HepG2 (cell line): ENCODE measurements at regions of chr7 and their contacts with region 1.

Region 1: GRCh38 chr7:158353606-158354570 is 233.7 kb downstream of the PTPRN2 start:
- DNase-seq: peak; percentile 22
- ATAC-seq: peak; percentile 59
- H3K4me3 ChIP-seq: no peak overlapping the region
- H3K27ac ChIP-seq: no peak overlapping the region
- H3K4me1 ChIP-seq: no peaks in the 10 kb centered on the region
- H3K27me3 ChIP-seq: no peaks in the 10 kb centered on the region; a peak in 1 of 5 replicates
- CTCF ChIP-seq: peak; percentile 81
- EP300 ChIP-seq: no peak
- POLR2A ChIP-seq: no peak
- RAD21 ChIP-seq: 0 out of 2 replicates have a peak, but pooled peaks have one; percentile 26

Region 2: DNA sequence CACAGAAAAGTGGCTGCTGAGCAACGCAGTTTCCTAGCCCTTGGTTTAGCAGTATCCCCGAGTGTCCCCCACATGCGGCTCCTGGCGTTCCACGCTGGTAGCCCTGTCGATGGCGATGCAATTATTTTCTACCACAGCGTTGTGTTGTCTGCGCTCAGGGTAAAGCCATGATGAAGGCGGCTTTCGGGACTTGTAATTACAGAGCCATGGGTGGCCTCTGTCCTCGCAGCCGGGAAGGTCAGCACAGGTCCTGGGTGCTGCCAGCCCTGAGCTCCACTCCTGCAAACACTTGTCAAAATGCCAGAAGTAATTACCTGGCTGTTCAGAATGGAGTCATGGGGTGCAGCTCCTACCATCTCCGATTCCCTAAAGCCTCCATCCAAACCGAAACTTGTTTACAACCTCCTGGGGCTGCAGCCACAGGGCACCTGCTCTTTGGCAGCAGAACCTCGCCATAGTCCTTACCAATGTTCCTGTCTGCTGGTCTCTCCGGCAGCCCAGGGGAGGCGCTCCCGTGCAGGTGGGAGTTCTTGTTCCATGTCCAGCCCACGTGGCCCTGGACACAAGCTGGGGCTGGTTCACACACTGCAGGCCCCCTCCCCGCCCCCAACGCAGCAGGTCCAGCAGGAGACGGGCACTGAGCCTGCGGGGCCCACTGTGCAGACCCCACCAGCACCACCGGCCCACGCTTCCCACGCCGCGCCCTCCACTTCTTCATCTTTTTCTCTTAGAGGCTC is 278.8 kb before region 1 on chr7:
- CTCF ChIA-PET with region 1: no interaction called
- POLR2A ChIA-PET with region 1: no interaction called
- in situ Hi-C with region 1: loop called (anchors 25 kb)
- intact Hi-C with region 1: no loop called
- DNase-seq: no peak
- ATAC-seq: no peak
- H3K4me3 ChIP-seq: no peak overlapping the region
- H3K27ac ChIP-seq: no peak overlapping the region
- H3K4me1 ChIP-seq: no peaks in the 10 kb centered on the region
- H3K27me3 ChIP-seq: no peaks in the 10 kb centered on the region
- CTCF ChIP-seq: no peak
- EP300 ChIP-seq: no peak
- POLR2A ChIP-seq: no peak
- RAD21 ChIP-seq: no peak